Activated CD8-positive, alpha-beta T cell treated with anti-CD3 and anti-CD28 coated beads, Interleukin-2, amount 10 ng/mL, durations not matched to agents 7 days and 5 days (primary cell): ENCODE measurements at regions of chr21 and their contacts with region 1.

Region 1: DNA sequence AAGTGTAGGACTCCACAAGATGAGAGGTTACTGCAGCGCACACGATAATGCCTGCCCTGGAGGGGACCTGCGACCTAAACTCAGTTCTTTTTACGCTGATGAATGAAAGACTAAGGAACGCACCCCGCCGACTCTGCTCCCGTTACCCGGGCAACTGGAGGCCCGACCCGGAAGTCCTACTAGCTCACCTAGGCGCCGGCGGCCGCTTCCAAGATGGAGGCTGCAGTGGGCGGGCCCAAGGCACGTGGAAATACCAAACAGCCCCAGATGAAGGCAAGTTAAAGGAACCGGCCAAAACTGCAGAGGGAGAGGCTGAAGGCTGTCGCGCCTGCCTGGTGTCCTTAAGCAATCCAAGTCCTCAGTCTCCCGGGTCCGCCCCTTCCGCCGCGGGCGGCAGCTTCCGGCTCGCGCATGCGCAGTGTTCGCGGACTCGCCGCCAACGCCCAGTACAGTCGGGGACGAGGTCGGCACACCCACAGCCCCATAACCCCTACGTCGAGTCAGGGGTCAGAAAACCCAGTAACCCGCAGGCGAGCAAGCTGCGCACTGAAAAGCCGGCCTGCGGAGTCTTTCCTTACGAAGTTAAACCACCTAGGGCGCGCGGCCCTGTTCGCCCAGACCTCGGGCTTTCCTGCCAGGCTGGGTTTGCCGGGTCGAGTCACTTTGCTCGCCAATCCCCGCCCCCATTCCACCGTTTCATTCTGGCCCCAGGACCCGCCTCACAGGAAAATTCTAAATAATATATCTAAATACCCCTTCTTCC is at the start of gene SETD4:
- DNase-seq: peak; percentile 92
- ATAC-seq: peak; percentile 91
- H3K4me3 Mint-ChIP-seq: peak within 1 kb of the TSS; percentile 91
- H3K27ac Mint-ChIP-seq: peak within 1 kb of the TSS; percentile 97
- H3K4me1 Mint-ChIP-seq: peaks cover 30% of the 10 kb centered on the region
- H3K27me3 Mint-ChIP-seq: no peaks in the 10 kb centered on the region
- total RNA-seq, gene SETD4: 19.8 to 22.3 TPM

Region 2: GRCh38 chr21:36021251-36021837 is 39.0 kb before region 1 on chr21:
- CTCF ChIA-PET with region 1: no interaction called
- POLR2A ChIA-PET with region 1: no interaction called
- DNase-seq: no peak
- ATAC-seq: no peak
- H3K4me3 Mint-ChIP-seq: no peak overlapping the region
- H3K27ac Mint-ChIP-seq: no peak overlapping the region
- H3K4me1 Mint-ChIP-seq: no peaks in the 10 kb centered on the region
- H3K27me3 Mint-ChIP-seq: no peaks in the 10 kb centered on the region

Region 3: GRCh38 chr21:36135391-36136102 is 75.2 kb after region 1 on chr21:
- CTCF ChIA-PET with region 1: no interaction called
- POLR2A ChIA-PET with region 1: interaction called, 11 read pairs
- DNase-seq: peak; percentile 81
- ATAC-seq: peak; percentile 89
- H3K4me3 Mint-ChIP-seq: peak overlapping the region; percentile 95
- H3K27ac Mint-ChIP-seq: peak overlapping the region; percentile 94
- H3K4me1 Mint-ChIP-seq: peaks cover 41% of the 10 kb centered on the region
- H3K27me3 Mint-ChIP-seq: no peaks in the 10 kb centered on the region